Adrenal gland (tissue), 19 donors: ENCODE measurements at regions of chr20 and their contacts with region 1.

Region 1: GRCh38 chr20:48965189-48965910 is 43.8 kb downstream of the ARFGEF2 start:
- DNase-seq: no peak
- H3K4me3 ChIP-seq: no peak overlapping the region
- H3K27ac ChIP-seq: peak overlapping the region in 1 of 5 donors; percentile 9
- H3K4me1 ChIP-seq: peaks cover 0 to 9% of the 10 kb centered on the region in 2 donors
- H3K27me3 ChIP-seq: no peaks in the 10 kb centered on the region
- CTCF ChIP-seq: no peak
- POLR2A ChIP-seq: no peak

Region 2: GRCh38 chr20:48933017-48933766 is 32.2 kb before region 1 on chr20:
- intact Hi-C with region 1: loop called in 1 of 2 experiments (anchors 5 kb)
- DNase-seq: no peak
- H3K4me3 ChIP-seq: no peak overlapping the region
- H3K27ac ChIP-seq: no peak overlapping the region
- H3K4me1 ChIP-seq: peaks cover 42 to 62% of the 10 kb centered on the region in 2 donors
- H3K27me3 ChIP-seq: no peaks in the 10 kb centered on the region
- CTCF ChIP-seq: no peak
- POLR2A ChIP-seq: no peak

Region 3: DNA sequence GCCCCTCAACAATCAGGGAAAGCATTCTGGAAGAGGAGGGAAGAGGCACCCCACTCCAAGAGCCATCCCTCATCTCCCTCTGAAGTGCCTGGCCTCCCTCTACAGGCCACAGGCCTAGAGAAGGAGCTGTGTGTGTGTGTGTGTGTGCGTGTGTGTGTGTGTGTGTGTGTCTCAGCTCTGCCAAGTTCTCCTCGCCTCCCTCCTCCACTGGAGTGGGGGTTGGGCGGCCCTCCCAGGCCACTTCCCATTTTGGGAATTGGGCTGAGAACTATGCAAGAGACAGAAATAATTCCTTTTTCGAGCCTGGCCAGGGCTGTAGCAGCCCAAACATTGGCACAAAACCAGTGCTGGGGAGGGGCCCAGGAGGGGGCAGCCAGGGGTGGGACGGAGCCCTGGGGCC is 481.5 kb after region 1 on chr20:
- intact Hi-C with region 1: no loop called
- DNase-seq: peak; percentile 34 to 74 (median 50)
- H3K4me3 ChIP-seq: no peak overlapping the region
- H3K27ac ChIP-seq: peak overlapping the region in 1 of 5 donors; percentile 1
- H3K4me1 ChIP-seq: peaks cover 0 to 19% of the 10 kb centered on the region in 2 donors
- H3K27me3 ChIP-seq: no peaks in the 10 kb centered on the region
- CTCF ChIP-seq: no peak
- POLR2A ChIP-seq: no peak